PC-9 (cell line): ENCODE measurements at regions of chr7 and their contacts with region 1.

Region 1: GRCh38 chr7:66628361-66629140 is at the start of gene KCTD7:
- DNase-seq: peak; percentile 88 to 99
- H3K4me3 ChIP-seq: peak within 1 kb of the TSS; percentile 91
- H3K27ac ChIP-seq: peak within 1 kb of the TSS; percentile 30
- H3K4me1 ChIP-seq: peaks cover 3% of the 10 kb centered on the region; the same call in 1 of the 2 replicates
- H3K27me3 ChIP-seq: no peaks in the 10 kb centered on the region
- CTCF ChIP-seq: no peak
- total RNA-seq, gene KCTD7: 7.1 and 9.8 TPM in 2 replicates

Region 2: GRCh38 chr7:66591799-66592596 is 36.6 kb before region 1 on chr7:
- CTCF ChIA-PET with region 1: interaction called, 4 read pairs
- POLR2A ChIA-PET with region 1: interaction called, 7 read pairs
- intact Hi-C with region 1: loop called (anchors 5 kb)
- DNase-seq: peak; percentile 81 to 89
- H3K4me3 ChIP-seq: peak overlapping the region; percentile 97
- H3K27ac ChIP-seq: peak overlapping the region; percentile 43
- H3K4me1 ChIP-seq: peaks cover 17% of the 10 kb centered on the region
- H3K27me3 ChIP-seq: no peaks in the 10 kb centered on the region
- CTCF ChIP-seq: no peak

Region 3: DNA sequence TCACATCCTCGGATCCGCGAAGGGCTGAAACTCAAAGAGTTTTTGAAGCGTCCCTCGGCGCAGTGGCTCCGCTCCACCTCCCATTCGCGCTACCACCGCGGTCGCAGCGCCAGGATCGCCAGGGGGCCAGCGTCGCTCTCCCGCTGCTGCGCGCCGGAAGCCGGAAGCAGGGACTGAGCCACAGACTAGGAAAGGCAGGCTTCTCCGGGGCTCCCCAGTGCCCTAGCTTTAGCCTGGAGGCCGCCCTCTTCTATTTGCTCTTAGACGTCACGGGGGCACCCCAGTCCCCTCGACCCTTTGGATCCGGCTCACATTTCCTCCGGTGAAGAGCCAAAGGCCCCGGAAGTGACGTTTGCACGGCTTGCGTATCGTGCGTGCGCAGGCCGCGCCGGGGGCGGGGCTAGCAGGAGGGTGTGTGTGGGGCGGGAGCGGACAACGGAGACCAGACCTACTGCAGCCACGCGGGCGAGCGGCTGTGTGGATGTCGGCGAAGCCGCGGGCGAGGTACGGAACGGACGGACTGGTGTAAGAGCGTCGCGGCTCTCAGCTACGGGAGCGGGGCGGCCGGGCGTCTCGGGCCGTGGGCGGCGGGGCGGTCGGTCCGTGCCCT is 25.7 kb after region 1 on chr7:
- CTCF ChIA-PET with region 1: no interaction called
- POLR2A ChIA-PET with region 1: interaction called, 6 read pairs
- intact Hi-C with region 1: loop called (anchors 1 kb)
- DNase-seq: peak; percentile 96 to 99
- H3K4me3 ChIP-seq: peak overlapping the region; percentile 64
- H3K27ac ChIP-seq: peak overlapping the region; percentile 92
- H3K4me1 ChIP-seq: peaks cover 19% of the 10 kb centered on the region
- H3K27me3 ChIP-seq: no peaks in the 10 kb centered on the region
- CTCF ChIP-seq: peak; percentile 32; the same call in 1 of the 2 replicates

Region 4: DNA sequence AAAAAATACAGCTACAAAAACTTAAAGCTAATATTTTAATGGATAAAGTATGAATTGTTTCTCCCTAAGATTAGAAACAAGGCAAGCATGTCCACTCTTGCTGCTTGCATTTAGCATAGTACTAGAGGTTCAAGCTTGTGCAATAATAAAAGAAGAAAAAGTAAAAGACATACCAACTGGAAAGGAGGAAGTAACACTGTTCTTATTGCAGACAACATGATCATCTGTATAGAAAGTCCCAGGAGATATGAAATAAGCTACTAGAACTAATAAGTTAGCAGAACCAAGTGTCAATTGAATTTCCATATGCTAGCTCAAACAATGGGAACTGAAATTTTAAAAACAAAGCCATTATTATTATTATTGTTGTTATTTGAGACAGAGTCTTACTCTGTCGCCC is 92.0 kb after region 1 on chr7:
- CTCF ChIA-PET with region 1: interaction called, 14 read pairs
- POLR2A ChIA-PET with region 1: no interaction called
- intact Hi-C with region 1: no loop called
- DNase-seq: no peak
- H3K4me3 ChIP-seq: no peak overlapping the region
- H3K27ac ChIP-seq: no peak overlapping the region
- H3K4me1 ChIP-seq: no peaks in the 10 kb centered on the region
- H3K27me3 ChIP-seq: no peaks in the 10 kb centered on the region
- CTCF ChIP-seq: no peak

Region 5: DNA sequence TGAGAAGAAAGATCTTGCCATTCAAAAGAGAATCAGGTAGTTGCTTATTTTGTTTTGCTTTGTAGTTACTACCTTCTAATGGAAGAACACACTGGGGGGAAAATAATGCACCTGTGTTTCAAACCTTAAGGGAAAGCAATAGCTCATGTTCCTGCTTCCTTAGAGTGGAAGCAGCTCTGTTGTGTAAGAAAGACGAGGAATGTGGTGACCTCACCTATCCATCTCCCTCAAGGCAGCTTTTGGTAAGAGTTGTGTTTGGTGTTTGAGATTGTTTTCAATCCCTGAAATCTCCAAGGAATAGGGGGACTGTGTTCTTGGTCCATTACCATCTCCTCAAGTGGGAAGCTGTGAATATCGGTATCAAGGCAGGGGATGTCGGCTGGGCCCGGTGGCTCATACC is 168.9 kb after region 1 on chr7:
- CTCF ChIA-PET with region 1: no interaction called
- POLR2A ChIA-PET with region 1: interaction called, 16 read pairs
- intact Hi-C with region 1: no loop called
- DNase-seq: no peak
- H3K4me3 ChIP-seq: no peak overlapping the region
- H3K27ac ChIP-seq: no peak overlapping the region
- H3K4me1 ChIP-seq: no peaks in the 10 kb centered on the region
- H3K27me3 ChIP-seq: no peaks in the 10 kb centered on the region
- CTCF ChIP-seq: no peak